Spleen (tissue), 13 donors: ENCODE measurements at regions of chr4 and their contacts with region 1.

Region 1: DNA sequence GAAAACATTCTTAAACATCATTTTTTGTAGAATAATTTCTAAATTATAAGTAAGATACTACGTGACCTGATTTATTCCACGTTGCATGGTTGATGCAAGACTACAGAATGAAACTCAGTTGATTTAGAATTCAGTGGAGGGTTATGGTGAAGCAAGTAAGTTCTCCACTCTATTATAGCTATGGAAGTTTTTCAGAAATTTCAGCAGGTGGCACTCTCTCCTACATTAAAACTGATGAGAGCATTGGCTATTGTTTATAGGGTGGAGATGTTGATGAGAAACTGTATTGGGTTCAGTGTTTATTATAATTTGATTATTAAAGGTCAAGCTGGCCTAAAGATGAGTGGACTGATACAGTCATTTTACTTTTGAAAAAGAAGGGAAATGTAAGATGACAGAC is 88.0 kb downstream of the FNIP2 start:
- DNase-seq: no peak
- H3K4me3 ChIP-seq: no peak overlapping the region
- H3K27ac ChIP-seq: no peak overlapping the region
- H3K4me1 ChIP-seq: no peaks in the 10 kb centered on the region
- H3K27me3 ChIP-seq: no peaks in the 10 kb centered on the region
- CTCF ChIP-seq: peak in 9 of 11 experiments; percentile 16 to 67 (median 54)
- POLR2A ChIP-seq: no peak

Region 2: GRCh38 chr4:158610790-158611189 is 246.1 kb before region 1 on chr4:
- intact Hi-C with region 1: no loop called
- DNase-seq: no peak
- H3K4me3 ChIP-seq: no peak overlapping the region
- H3K27ac ChIP-seq: peak overlapping the region in 1 of 8 donors; percentile 34
- H3K4me1 ChIP-seq: peaks cover 0 to 12% (median 0%) of the 10 kb centered on the region in 6 donors
- H3K27me3 ChIP-seq: no peaks in the 10 kb centered on the region
- CTCF ChIP-seq: no peak
- POLR2A ChIP-seq: no peak

Region 3: DNA sequence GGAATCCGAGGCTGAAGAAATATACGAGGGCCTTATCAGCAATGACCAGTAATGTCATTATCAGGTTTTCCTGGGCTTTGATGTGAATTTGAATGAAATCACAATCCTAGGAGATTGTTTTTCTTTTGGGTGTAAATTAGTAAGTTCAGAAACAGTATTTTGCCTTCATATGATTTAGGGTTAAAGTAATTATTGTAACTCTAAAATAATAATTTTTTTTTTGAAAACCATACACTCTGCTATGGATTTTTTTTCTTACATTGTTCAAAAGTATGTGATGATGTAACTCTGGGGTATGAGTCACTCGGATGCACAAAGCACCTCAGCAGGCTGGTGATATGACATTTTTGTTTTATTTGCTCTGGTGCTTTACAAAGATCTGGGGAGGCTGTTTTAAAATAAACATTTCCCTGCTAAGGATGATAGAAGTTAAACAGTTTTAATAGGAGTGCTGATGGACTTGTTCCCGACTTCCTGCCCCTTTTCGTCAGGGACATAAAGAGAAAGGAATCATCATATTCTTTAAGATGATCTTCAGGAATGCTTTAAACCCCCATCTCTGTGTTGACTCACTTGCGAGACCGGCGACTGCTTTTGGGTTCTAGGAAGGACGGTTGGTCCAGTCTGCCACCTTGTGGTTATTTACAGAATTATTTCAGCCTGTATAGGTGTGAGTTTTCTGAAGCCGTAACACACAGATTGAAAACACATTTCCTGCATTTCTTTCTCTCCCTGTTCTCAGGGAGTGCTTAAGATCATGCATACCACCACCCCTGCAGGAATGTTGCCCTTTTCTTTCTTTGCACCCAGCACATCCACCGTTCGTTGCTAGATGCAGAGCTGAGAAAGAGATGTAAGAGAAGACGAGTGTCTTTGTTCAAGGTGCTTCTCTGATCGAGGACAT is 318.5 kb after region 1 on chr4:
- intact Hi-C with region 1: loop called (anchors 2 kb)
- DNase-seq: peak; percentile 74
- H3K4me3 ChIP-seq: peak overlapping the region in 1 of 8 donors; percentile 12
- H3K27ac ChIP-seq: peak overlapping the region in 4 of 8 donors; percentile 18 to 60 (median 24)
- H3K4me1 ChIP-seq: peaks cover 6 to 97% (median 58%) of the 10 kb centered on the region in 6 donors
- H3K27me3 ChIP-seq: no peaks in the 10 kb centered on the region
- CTCF ChIP-seq: peak; percentile 64 to 89 (median 78)
- POLR2A ChIP-seq: no peak

Region 4: DNA sequence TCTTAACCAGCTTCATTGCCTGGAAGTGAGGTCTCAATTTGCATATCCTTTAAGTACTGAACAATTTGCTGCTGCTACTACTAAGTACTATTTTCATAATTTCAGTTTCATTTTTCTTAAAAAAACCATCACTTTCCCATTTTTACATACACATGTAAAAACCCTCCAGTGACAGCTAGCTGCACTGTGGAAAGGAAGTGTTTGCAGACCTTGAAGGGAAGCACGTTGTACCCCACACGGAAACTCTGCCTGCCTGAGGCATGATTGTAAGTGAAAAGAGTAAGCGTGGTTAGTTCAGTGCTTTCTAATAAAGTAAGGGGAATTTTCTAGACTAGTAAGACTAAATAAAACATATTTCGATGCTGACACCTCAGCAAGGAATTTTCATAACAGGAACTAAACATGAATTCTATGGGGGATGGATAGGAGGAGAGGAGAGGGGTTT is 349.6 kb after region 1 on chr4:
- intact Hi-C with region 1: loop called (anchors 10 kb)
- DNase-seq: no peak
- H3K4me3 ChIP-seq: peak overlapping the region in 1 of 8 donors; percentile 6
- H3K27ac ChIP-seq: peak overlapping the region in 7 of 8 donors; percentile 4 to 67 (median 52)
- H3K4me1 ChIP-seq: peaks cover 7 to 65% (median 32%) of the 10 kb centered on the region in 6 donors
- H3K27me3 ChIP-seq: no peaks in the 10 kb centered on the region
- CTCF ChIP-seq: no peak
- POLR2A ChIP-seq: no peak

Region 5: GRCh38 chr4:159446266-159446976 is 589.6 kb after region 1 on chr4:
- intact Hi-C with region 1: loop called (anchors 10 kb)
- DNase-seq: no peak
- H3K4me3 ChIP-seq: no peak overlapping the region
- H3K27ac ChIP-seq: no peak overlapping the region
- H3K4me1 ChIP-seq: no peaks in the 10 kb centered on the region
- H3K27me3 ChIP-seq: no peaks in the 10 kb centered on the region
- CTCF ChIP-seq: peak; percentile 52 to 89 (median 78)
- POLR2A ChIP-seq: no peak